ENCODE measurements at regions of chr14 and their contacts with region 1.

Region 1: GRCh38 chr14:27050190-27050589 is 452.4 kb upstream of the NOVA1 start:
- DNase-seq: no peak
- H3K4me3 ChIP-seq: no peak overlapping the region
- H3K27ac ChIP-seq: no peak overlapping the region
- H3K4me1 ChIP-seq: no peaks in the 10 kb centered on the region
- H3K27me3 ChIP-seq: no peaks in the 10 kb centered on the region
- CTCF ChIP-seq: no peak
- POLR2A ChIP-seq: no peak

Region 2: GRCh38 chr14:27528328-27528727 is 478.1 kb after region 1 on chr14:
- CTCF ChIA-PET with region 1: no interaction called
- POLR2A ChIA-PET with region 1: no interaction called
- dilution Hi-C with region 1: no loop called
- intact Hi-C with region 1: loop called (anchors 1 kb)
- DNase-seq: peak; percentile 50
- H3K4me3 ChIP-seq: no peak overlapping the region
- H3K27ac ChIP-seq: no peak overlapping the region
- H3K4me1 ChIP-seq: no peaks in the 10 kb centered on the region
- H3K27me3 ChIP-seq: no peaks in the 10 kb centered on the region
- CTCF ChIP-seq: peak; percentile 32 to 51
- POLR2A ChIP-seq: no peak